ENCODE measurements at regions of chr1 and their contacts with region 1.

Region 1: GRCh38 chr1:33902486-33903209 is 38.8 kb downstream of the HMGB4 start:
- DNase-seq: no peak
- H3K4me3 ChIP-seq: no peak overlapping the region
- H3K27ac ChIP-seq: no peak overlapping the region
- H3K4me1 ChIP-seq: no peaks in the 10 kb centered on the region
- H3K27me3 ChIP-seq: no peaks in the 10 kb centered on the region
- CTCF ChIP-seq: no peak
- EP300 ChIP-seq: no peak
- POLR2A ChIP-seq: no peak

Region 2: GRCh38 chr1:33921281-33921680 is 18.6 kb after region 1 on chr1:
- intact Hi-C with region 1: loop called in 1 of 4 experiments (anchors 1 kb)
- DNase-seq: no peak
- H3K4me3 ChIP-seq: no peak overlapping the region
- H3K27ac ChIP-seq: no peak overlapping the region
- H3K4me1 ChIP-seq: no peaks in the 10 kb centered on the region
- H3K27me3 ChIP-seq: no peaks in the 10 kb centered on the region
- CTCF ChIP-seq: no peak
- EP300 ChIP-seq: no peak
- POLR2A ChIP-seq: no peak